Calu3 (cell line): ENCODE measurements at regions of chr19 and their contacts with region 1.

Region 1: GRCh38 chr19:15315101-15315500 is 17.2 kb downstream of the BRD4 start:
- DNase-seq: no peak
- H3K4me3 Mint-ChIP-seq: no peak overlapping the region
- H3K27ac Mint-ChIP-seq: no peak overlapping the region
- H3K4me1 Mint-ChIP-seq: peaks cover 28% of the 10 kb centered on the region
- H3K27me3 Mint-ChIP-seq: no peaks in the 10 kb centered on the region
- CTCF ChIP-seq: no peak

Region 2: DNA sequence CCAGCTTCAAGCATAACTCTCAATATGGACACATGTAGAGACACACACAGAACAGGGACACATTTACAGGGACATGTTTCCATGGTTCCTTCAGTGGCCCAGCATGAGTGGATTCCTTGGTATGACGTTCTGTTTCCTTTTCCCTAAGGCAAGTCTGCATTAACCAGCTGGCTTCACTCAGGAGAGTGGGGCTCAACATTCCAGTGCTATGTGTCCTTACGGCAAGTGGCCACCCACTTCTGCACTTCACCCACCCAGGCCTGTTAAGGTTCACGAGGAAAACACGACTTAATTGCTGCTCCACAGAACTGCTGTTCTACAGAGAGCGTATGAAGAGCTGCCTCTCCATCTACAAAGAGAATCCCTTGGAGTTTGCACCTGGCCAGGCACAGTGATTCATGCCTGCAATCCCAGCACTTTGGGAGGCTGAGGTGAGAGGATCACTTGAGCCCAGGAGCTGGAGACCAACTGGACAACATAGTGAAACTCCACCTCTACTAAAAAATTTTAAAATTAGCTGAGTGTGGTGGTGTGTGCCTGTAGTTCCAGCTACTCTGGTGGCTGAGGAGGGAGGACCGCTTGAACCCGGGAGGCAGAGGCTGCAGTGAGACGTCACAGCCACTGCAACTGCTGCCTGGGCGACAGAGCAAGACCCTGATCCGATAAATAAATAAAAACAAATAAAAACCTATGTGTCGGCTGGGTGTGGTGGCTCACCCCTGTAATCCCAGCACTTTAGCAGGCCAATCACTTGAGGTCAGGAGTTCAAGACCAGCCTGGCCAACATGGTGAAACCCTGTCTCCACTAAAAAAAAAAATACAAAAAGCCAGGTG is 15.3 kb before region 1 on chr19:
- CTCF ChIA-PET with region 1: interaction called, 17 read pairs
- intact Hi-C with region 1: no loop called
- DNase-seq: no peak
- H3K4me3 Mint-ChIP-seq: no peak overlapping the region
- H3K27ac Mint-ChIP-seq: no peak overlapping the region
- H3K4me1 Mint-ChIP-seq: peaks cover 42% of the 10 kb centered on the region
- H3K27me3 Mint-ChIP-seq: no peaks in the 10 kb centered on the region
- CTCF ChIP-seq: no peak